ENCODE measurements at regions of chr2 and their contacts with region 1.

Region 1: DNA sequence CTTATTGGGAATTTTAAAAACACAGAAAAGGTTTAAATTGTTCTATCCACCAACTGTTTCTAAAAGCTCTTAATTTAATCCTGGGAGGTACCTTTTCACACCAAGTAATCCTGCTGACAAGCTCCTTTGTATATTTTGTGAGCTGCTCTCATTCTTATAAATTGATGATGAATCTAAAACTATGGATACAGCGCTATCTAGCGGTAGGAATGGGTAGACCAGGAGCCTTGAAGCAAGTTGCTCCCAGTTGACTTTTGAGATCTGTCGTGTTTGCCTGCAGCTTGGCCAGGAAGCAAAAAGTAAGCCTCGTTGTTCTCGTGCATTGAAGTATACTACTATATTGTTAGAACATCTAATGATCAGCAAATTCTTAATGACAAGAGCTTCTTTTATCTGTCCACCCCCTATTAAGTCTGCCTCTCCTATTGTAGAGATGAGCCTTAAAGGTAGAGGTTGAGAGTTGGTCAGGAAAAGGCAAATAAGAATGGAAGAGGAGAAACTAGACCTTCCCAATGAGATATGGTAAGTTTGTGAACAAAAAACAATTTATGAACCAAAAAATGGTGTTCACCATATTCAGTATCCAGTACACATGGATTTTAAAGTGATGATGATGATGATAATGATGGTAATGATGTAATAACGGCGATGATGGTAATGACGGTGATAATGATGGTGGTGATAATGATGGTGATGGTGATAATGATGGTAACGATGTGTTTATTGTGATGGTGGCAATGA is 212.0 kb upstream of the NCKAP5 start:
- DNase-seq: no peak
- ATAC-seq: peak; percentile 70
- H3K4me3 ChIP-seq: no peak overlapping the region
- H3K27ac ChIP-seq: no peak overlapping the region
- H3K4me1 ChIP-seq: no peaks in the 10 kb centered on the region
- H3K27me3 ChIP-seq: no peaks in the 10 kb centered on the region

Region 2: GRCh38 chr2:133517876-133518275 is 262.4 kb before region 1 on chr2:
- intact Hi-C with region 1: loop called in 1 of 2 experiments (anchors 5 kb)
- DNase-seq: no peak
- ATAC-seq: no peak
- H3K4me3 ChIP-seq: no peak overlapping the region
- H3K27ac ChIP-seq: no peak overlapping the region
- H3K4me1 ChIP-seq: no peaks in the 10 kb centered on the region
- H3K27me3 ChIP-seq: no peaks in the 10 kb centered on the region

Region 3: GRCh38 chr2:133581010-133581760 is 199.1 kb before region 1 on chr2:
- intact Hi-C with region 1: loop called in 1 of 2 experiments (anchors 10 kb)
- DNase-seq: no peak
- ATAC-seq: no peak
- H3K4me3 ChIP-seq: no peak overlapping the region
- H3K27ac ChIP-seq: no peak overlapping the region
- H3K4me1 ChIP-seq: no peaks in the 10 kb centered on the region
- H3K27me3 ChIP-seq: peaks cover 0 to 2% of the 10 kb centered on the region in 2 donors

Region 4: DNA sequence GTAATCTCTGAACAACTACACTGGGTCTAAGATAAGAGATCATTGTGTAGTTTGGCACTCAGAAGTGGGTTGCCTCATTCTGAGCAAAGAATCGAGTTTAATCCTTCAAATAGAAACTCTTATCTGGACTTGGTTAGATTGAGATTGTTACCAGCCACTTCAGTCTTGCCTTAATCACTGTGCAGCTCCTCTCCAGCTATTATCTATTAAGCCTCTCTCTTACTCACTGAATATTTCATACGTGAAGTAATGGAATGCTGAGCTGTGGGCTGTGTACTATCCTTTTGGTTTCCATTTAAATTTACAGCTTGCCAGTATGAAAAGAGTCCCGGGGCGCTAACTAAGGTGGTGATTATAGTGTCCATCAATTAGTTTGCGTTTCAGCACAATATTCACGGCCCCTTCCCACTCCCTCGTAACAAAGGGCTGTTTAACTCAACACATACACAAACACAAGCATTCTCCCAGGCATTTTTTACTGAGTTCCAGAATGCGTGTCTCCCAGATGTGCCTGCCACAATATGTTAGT is 146.3 kb before region 1 on chr2:
- intact Hi-C with region 1: no loop called
- DNase-seq: no peak
- ATAC-seq: no peak
- H3K4me3 ChIP-seq: no peak overlapping the region
- H3K27ac ChIP-seq: no peak overlapping the region
- H3K4me1 ChIP-seq: no peaks in the 10 kb centered on the region
- H3K27me3 ChIP-seq: no peaks in the 10 kb centered on the region

Region 5: GRCh38 chr2:133674433-133675331 is 105.6 kb before region 1 on chr2:
- intact Hi-C with region 1: no loop called
- DNase-seq: peak in 1 of 2 donors; percentile 50
- ATAC-seq: peak; percentile 24
- H3K4me3 ChIP-seq: peak overlapping the region; percentile 45 to 69
- H3K27ac ChIP-seq: peak overlapping the region in 1 of 2 donors; percentile 36
- H3K4me1 ChIP-seq: peaks cover 7 to 19% of the 10 kb centered on the region in 2 donors
- H3K27me3 ChIP-seq: no peaks in the 10 kb centered on the region

Region 6: GRCh38 chr2:133833746-133834145 is 53.5 kb after region 1 on chr2:
- intact Hi-C with region 1: no loop called
- DNase-seq: no peak
- ATAC-seq: no peak
- H3K4me3 ChIP-seq: no peak overlapping the region
- H3K27ac ChIP-seq: no peak overlapping the region
- H3K4me1 ChIP-seq: no peaks in the 10 kb centered on the region
- H3K27me3 ChIP-seq: no peaks in the 10 kb centered on the region

Region 7: GRCh38 chr2:133844214-133844892 is 64.1 kb after region 1 on chr2:
- intact Hi-C with region 1: loop called in 1 of 2 experiments (anchors 10 kb)
- DNase-seq: peak; percentile 61 to 79
- ATAC-seq: peak; percentile 84
- H3K4me3 ChIP-seq: no peak overlapping the region
- H3K27ac ChIP-seq: no peak overlapping the region
- H3K4me1 ChIP-seq: no peaks in the 10 kb centered on the region
- H3K27me3 ChIP-seq: no peaks in the 10 kb centered on the region

Measured in aorta (tissue), 5 donors.